Activated CD4-positive, alpha-beta memory T cell treated with anti-CD3 and anti-CD28 coated beads for 36 hours (primary cell): ENCODE measurements at regions of chr6 and their contacts with region 1.

Region 1: DNA sequence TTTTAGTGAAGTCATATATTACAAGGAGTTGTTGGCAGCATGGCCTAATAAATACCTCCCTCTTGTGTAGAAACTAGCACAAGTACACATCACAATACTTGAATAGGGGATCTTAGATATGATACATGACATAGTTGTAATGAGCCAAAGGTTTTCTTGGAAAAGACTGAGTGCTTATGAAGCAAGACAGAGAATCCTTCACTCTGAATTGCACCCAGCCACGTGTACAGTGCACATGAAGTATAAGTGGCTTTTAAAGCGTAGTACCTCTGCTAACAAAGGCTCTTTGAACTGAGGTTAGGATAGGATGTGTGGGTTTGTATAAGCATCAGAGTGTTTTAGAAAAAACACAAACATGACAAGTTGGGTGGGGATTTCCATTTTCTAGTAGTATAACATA is 145.5 kb upstream of the STMND1 start:
- DNase-seq: peak; percentile 19
- H3K4me3 Mint-ChIP-seq: no peak overlapping the region
- H3K27ac Mint-ChIP-seq: peak overlapping the region; percentile 44
- H3K4me1 Mint-ChIP-seq: peaks cover 32% of the 10 kb centered on the region
- H3K27me3 Mint-ChIP-seq: peaks cover 17% of the 10 kb centered on the region

Region 2: DNA sequence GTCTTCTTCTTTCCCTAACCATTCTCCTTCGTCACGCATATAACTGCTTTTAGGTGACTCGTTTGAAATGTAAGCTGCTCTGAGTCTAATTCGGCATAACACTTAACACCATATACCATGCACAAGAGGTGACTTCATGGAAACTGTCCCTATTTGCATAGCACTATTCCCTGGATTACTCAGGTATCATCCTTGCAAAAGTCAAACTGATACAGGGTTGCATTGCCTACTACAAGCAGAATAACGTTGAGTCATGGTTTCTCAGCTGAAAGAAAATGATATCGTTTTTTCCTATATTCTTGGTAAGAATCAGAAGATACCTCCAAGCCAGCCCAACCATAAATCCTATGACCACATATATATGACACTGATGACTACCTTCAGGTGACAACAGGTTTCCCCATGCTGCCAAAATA is 422.6 kb before region 1 on chr6:
- CTCF ChIA-PET with region 1: no interaction called
- POLR2A ChIA-PET with region 1: no interaction called
- intact Hi-C with region 1: loop called (anchors 10 kb)
- DNase-seq: no peak
- H3K4me3 Mint-ChIP-seq: no peak overlapping the region
- H3K27ac Mint-ChIP-seq: peak overlapping the region; percentile 77
- H3K4me1 Mint-ChIP-seq: peaks cover 43% of the 10 kb centered on the region
- H3K27me3 Mint-ChIP-seq: no peaks in the 10 kb centered on the region

Region 3: GRCh38 chr6:16770701-16771569 is 185.4 kb before region 1 on chr6:
- CTCF ChIA-PET with region 1: interaction called, 3 read pairs
- POLR2A ChIA-PET with region 1: no interaction called
- intact Hi-C with region 1: loop called (anchors 1 kb)
- DNase-seq: peak; percentile 86
- H3K4me3 Mint-ChIP-seq: peak overlapping the region; percentile 42
- H3K27ac Mint-ChIP-seq: no peak overlapping the region
- H3K4me1 Mint-ChIP-seq: peaks cover 50% of the 10 kb centered on the region
- H3K27me3 Mint-ChIP-seq: no peaks in the 10 kb centered on the region

Region 4: GRCh38 chr6:16921399-16922110 is 34.8 kb before region 1 on chr6:
- CTCF ChIA-PET with region 1: no interaction called
- POLR2A ChIA-PET with region 1: no interaction called
- intact Hi-C with region 1: no loop called
- DNase-seq: no peak
- H3K4me3 Mint-ChIP-seq: no peak overlapping the region
- H3K27ac Mint-ChIP-seq: no peak overlapping the region
- H3K4me1 Mint-ChIP-seq: no peaks in the 10 kb centered on the region
- H3K27me3 Mint-ChIP-seq: peaks cover 15% of the 10 kb centered on the region

Region 5: GRCh38 chr6:17086469-17086868 is 130.1 kb after region 1 on chr6:
- CTCF ChIA-PET with region 1: no interaction called
- POLR2A ChIA-PET with region 1: no interaction called
- intact Hi-C with region 1: no loop called
- DNase-seq: peak; percentile 19
- H3K4me3 Mint-ChIP-seq: no peak overlapping the region
- H3K27ac Mint-ChIP-seq: no peak overlapping the region
- H3K4me1 Mint-ChIP-seq: no peaks in the 10 kb centered on the region
- H3K27me3 Mint-ChIP-seq: peaks cover 7% of the 10 kb centered on the region